ENCODE measurements at regions of chr3 and their contacts with region 1.

Region 1: GRCh38 chr3:100260685-100261484 is at the start of gene TBC1D23:
- DNase-seq: peak; percentile 94 to 99
- ATAC-seq: peak; percentile 98 to 100 (median 99)
- H3K4me3 ChIP-seq: peak within 1 kb of the TSS; percentile 80
- H3K4me3 Mint-ChIP-seq: peak within 1 kb of the TSS; percentile 94
- H3K27ac ChIP-seq: peak within 1 kb of the TSS; percentile 93
- H3K27ac Mint-ChIP-seq: peak within 1 kb of the TSS; percentile 95 to 96
- H3K4me1 ChIP-seq: peaks cover 18% of the 10 kb centered on the region
- H3K4me1 Mint-ChIP-seq: peaks cover 39 to 48% of the 10 kb centered on the region in 2 donors
- H3K27me3 ChIP-seq: no peaks in the 10 kb centered on the region
- H3K27me3 Mint-ChIP-seq: no peaks in the 10 kb centered on the region
- CTCF ChIP-seq: no peak
- total RNA-seq, gene TBC1D23: 38.8 to 50.3 (median 45.4) TPM

Region 2: DNA sequence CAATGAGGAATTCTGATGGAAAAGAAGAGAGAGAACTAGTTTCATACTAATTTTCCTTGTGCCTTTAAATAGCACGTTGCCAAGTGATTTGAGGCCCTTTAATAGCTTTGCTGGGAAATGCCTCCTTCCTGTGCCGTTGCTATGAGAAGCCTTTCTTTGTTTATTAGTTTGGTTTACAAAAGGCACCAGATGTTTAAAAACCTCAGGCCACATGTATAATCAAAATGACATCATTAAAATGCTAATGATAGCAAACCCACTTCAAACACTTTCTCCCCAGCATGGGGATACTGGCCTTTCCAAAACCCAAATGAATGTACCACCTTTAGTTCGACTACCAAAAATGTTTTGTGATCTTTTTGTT is 50.1 kb before region 1 on chr3:
- intact Hi-C with region 1: no loop called
- DNase-seq: peak in 1 of 2 donors; percentile 62
- ATAC-seq: peak; percentile 39 to 66 (median 52)
- H3K4me3 ChIP-seq: no peak overlapping the region
- H3K4me3 Mint-ChIP-seq: no peak overlapping the region
- H3K27ac ChIP-seq: peak overlapping the region; percentile 27
- H3K27ac Mint-ChIP-seq: peak overlapping the region; percentile 67 to 74
- H3K4me1 ChIP-seq: peaks cover 10% of the 10 kb centered on the region
- H3K4me1 Mint-ChIP-seq: peaks cover 10 to 13% of the 10 kb centered on the region in 2 donors
- H3K27me3 ChIP-seq: no peaks in the 10 kb centered on the region
- H3K27me3 Mint-ChIP-seq: no peaks in the 10 kb centered on the region
- CTCF ChIP-seq: no peak

Region 3: DNA sequence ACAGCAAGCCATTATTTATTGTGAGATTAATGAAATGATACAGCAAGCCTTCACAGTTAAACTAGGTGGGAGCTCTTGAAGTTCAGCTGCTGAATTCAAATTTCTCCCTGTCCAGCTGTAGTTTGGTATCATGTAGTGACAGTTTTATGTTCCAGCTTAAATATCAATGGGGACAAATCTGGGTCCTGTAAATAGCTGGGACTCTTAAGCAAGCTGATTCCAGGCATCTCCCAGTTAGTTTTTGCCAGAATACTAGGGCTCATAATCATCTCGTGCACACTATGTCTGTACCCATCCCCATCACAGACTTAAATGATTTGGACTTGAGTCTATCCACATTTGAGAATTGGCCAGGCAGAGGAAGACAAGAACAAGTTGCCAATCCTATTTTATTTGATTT is 45.8 kb after region 1 on chr3:
- intact Hi-C with region 1: no loop called
- DNase-seq: no peak
- ATAC-seq: no peak
- H3K4me3 ChIP-seq: no peak overlapping the region
- H3K4me3 Mint-ChIP-seq: no peak overlapping the region
- H3K27ac ChIP-seq: no peak overlapping the region
- H3K27ac Mint-ChIP-seq: no peak overlapping the region
- H3K4me1 ChIP-seq: no peaks in the 10 kb centered on the region
- H3K4me1 Mint-ChIP-seq: no peaks in the 10 kb centered on the region
- H3K27me3 ChIP-seq: no peaks in the 10 kb centered on the region
- H3K27me3 Mint-ChIP-seq: no peaks in the 10 kb centered on the region
- CTCF ChIP-seq: no peak

Region 4: DNA sequence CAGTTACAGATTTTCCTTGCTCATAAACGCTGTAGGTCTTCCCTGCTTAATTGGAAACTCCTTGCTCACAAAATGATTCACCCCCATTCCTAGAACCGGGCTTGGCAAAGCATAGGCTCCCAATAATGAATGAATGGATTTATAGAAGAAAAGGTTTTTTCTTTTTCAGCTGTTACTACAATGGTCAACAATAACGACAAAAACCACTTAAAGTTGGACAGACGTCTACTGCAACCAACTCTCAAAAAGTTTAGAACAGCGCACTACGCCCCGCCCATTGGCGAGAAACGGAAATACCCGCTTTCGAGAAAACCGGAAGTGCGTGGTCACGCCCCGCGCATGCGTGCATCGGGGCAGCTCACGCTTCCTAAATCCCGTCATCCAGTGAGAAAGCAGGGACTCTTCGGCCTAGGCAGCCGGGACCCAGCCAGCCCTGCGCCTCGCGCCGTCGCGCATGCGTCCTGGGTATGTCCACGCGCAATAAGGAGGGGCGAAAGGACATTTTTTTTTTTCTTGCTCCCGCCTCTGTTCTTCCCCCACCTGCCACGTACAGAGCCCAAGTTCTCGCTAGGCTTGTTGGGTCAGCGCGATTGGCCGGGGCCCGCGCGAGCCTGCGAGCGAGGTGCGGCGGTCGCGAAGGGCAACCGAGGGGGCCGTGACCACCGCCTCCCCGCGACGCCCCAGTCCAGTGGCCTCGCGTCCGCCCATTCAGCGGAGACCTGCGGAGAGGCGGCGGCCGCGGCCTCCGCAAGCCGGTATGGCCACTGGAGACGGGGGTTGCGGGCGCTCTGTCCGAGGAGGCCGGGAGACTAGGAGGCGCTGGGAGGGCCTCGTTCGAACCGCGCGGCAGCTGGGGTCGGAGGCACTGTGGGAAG is 448.3 kb after region 1 on chr3 and contains the start of gene TFG:
- intact Hi-C with region 1: loop called (anchors 5 kb)
- DNase-seq: peak; percentile 96 to 100
- ATAC-seq: peak; percentile 89 to 97 (median 92)
- H3K4me3 ChIP-seq: peak within 1 kb of the TSS; percentile 44
- H3K4me3 Mint-ChIP-seq: peak within 1 kb of the TSS; percentile 92
- H3K27ac ChIP-seq: peak within 1 kb of the TSS; percentile 84
- H3K27ac Mint-ChIP-seq: peak within 1 kb of the TSS; percentile 97 to 98
- H3K4me1 ChIP-seq: peaks cover 19% of the 10 kb centered on the region
- H3K4me1 Mint-ChIP-seq: peaks cover 37 to 46% of the 10 kb centered on the region in 2 donors
- H3K27me3 ChIP-seq: peaks cover 3% of the 10 kb centered on the region
- H3K27me3 Mint-ChIP-seq: peaks cover 17 to 28% of the 10 kb centered on the region in 2 donors
- CTCF ChIP-seq: no peak
- total RNA-seq, gene TFG: 47.6 to 52.8 (median 50.0) TPM

Measured in natural killer cell (primary cell).